Activated B cell treated with CpG ODN at 0.5 μM for 24 hours (primary cell): ENCODE measurements at regions of chr20 and their contacts with region 1.

Region 1: DNA sequence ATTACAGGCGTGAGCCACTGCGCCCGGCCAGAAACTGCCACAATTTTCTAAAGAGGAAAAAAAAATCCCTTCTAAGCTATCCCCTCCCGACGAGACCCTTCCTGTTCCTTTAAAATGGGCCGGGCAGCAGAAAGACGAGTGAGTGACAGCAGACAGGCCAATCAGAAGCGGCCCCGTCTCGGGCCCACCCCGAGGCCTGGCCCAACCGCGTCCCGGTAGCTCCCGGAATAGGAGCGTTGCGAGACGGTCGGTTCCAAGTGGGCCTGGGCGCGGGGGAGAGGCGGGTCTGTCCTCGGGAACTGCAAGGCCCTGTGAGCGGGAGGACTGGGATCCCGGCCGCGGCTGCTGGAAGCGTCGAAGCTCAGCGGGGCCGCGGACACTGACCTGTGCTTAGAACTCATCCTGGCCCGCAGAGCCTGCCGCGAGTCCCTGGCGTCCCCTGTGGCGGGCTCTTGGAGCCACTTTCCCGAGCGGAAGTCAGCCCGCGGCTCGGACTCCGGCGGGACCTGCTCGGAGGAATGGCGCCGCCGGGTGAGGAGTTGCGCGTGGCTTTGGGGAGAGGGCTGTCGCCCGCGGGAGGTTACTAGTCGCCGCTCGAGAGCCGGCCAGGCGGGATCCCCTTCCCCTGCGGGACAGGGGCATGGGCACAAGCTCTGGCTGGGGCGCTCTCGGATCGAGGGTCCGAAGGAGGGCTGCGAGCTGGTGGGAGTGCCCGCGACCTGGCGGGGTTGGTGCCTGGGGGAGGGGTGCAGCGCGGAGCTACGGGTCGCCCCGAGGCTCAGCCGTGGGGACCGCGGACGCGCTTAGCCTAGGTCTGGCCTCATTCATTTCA is at the starts of genes MROH8 and RPN2:
- DNase-seq: peak; percentile 88
- ATAC-seq: peak; percentile 91
- H3K4me3 Mint-ChIP-seq: peak within 1 kb of the TSS; percentile 98
- H3K27ac Mint-ChIP-seq: peak within 1 kb of the TSS; percentile 99
- H3K4me1 Mint-ChIP-seq: peaks cover 45% of the 10 kb centered on the region
- H3K27me3 Mint-ChIP-seq: no peaks in the 10 kb centered on the region
- CTCF ChIP-seq: no peak
- total RNA-seq, gene MROH8: 3.2 and 5.9 TPM in 2 replicates
- total RNA-seq, gene RPN2: 106 and 109 TPM in 2 replicates

Region 2: GRCh38 chr20:35771689-35772562 is 1407.1 kb before region 1 on chr20 and contains the start of gene PHF20:
- CTCF ChIA-PET with region 1: no interaction called
- POLR2A ChIA-PET with region 1: no interaction called
- intact Hi-C with region 1: loop called (anchors 2 kb)
- DNase-seq: peak; percentile 98
- ATAC-seq: peak; percentile 85
- H3K4me3 Mint-ChIP-seq: peak within 1 kb of the TSS; percentile 86
- H3K27ac Mint-ChIP-seq: peak within 1 kb of the TSS; percentile 95
- H3K4me1 Mint-ChIP-seq: peaks cover 79% of the 10 kb centered on the region
- H3K27me3 Mint-ChIP-seq: no peaks in the 10 kb centered on the region
- CTCF ChIP-seq: no peak
- total RNA-seq, gene PHF20: 72.3 and 86.0 TPM in 2 replicates

Region 3: GRCh38 chr20:36917943-36918342 is 261.1 kb before region 1 on chr20:
- CTCF ChIA-PET with region 1: no interaction called
- POLR2A ChIA-PET with region 1: no interaction called
- intact Hi-C with region 1: no loop called
- DNase-seq: no peak
- ATAC-seq: no peak
- H3K4me3 Mint-ChIP-seq: no peak overlapping the region
- H3K27ac Mint-ChIP-seq: no peak overlapping the region
- H3K4me1 Mint-ChIP-seq: no peaks in the 10 kb centered on the region
- H3K27me3 Mint-ChIP-seq: no peaks in the 10 kb centered on the region
- CTCF ChIP-seq: no peak

Region 4: DNA sequence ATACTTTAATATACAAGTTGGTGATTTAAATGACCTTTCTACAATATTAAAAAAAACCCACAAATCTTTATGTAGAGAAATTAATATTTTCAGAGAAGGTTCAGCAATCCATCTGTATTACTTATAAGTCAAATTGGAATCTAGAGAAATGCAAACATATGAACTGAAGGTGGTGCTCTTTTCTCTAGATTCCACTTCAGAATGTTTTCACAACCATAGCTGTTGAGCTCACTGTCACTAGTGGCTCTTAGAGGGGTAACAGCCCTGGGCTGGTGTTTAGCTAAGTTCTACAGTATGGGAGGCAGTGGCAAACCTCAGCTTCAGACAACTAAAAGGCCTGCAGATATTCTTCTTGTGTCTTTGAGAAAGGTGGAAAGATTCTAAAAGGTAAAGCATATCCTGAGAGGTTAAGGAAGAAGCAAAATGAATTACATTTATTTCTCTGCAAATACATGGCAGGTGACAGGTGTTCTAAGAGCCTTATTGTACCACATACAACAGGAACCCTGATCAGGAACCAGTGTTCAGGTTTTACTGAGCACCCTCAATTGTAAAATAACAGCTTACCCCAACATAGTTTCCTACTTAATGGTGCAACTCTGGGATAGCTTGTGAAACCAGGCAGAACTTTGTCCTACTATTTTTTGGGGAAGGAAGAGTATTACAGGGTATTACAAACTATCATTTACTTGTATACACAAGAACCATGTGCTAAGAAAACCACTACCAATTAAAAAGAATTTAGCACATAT is 171.0 kb before region 1 on chr20:
- CTCF ChIA-PET with region 1: interaction called, 4 read pairs
- POLR2A ChIA-PET with region 1: interaction called, 19 read pairs
- intact Hi-C with region 1: loop called (anchors 1 kb)
- DNase-seq: no peak
- ATAC-seq: peak; percentile 26
- H3K4me3 Mint-ChIP-seq: peak overlapping the region; percentile 17
- H3K27ac Mint-ChIP-seq: peak overlapping the region; percentile 69
- H3K4me1 Mint-ChIP-seq: peaks cover 45% of the 10 kb centered on the region
- H3K27me3 Mint-ChIP-seq: no peaks in the 10 kb centered on the region
- CTCF ChIP-seq: no peak

Region 5: GRCh38 chr20:37095599-37096414 is 83.2 kb before region 1 on chr20 and contains the start of gene RBL1:
- CTCF ChIA-PET with region 1: no interaction called
- POLR2A ChIA-PET with region 1: interaction called, 22 read pairs
- intact Hi-C with region 1: loop called (anchors 1 kb)
- DNase-seq: peak; percentile 85
- ATAC-seq: peak; percentile 87
- H3K4me3 Mint-ChIP-seq: peak within 1 kb of the TSS; percentile 99
- H3K27ac Mint-ChIP-seq: peak within 1 kb of the TSS; percentile 100
- H3K4me1 Mint-ChIP-seq: peaks cover 33% of the 10 kb centered on the region
- H3K27me3 Mint-ChIP-seq: no peaks in the 10 kb centered on the region
- CTCF ChIP-seq: no peak
- total RNA-seq, gene RBL1: 18.6 and 20.4 TPM in 2 replicates

Region 6: GRCh38 chr20:37270576-37271420 is 91.7 kb after region 1 on chr20:
- CTCF ChIA-PET with region 1: no interaction called
- POLR2A ChIA-PET with region 1: interaction called, 11 read pairs
- intact Hi-C with region 1: no loop called
- DNase-seq: peak; percentile 20
- ATAC-seq: peak; percentile 74
- H3K4me3 Mint-ChIP-seq: peak overlapping the region; percentile 11
- H3K27ac Mint-ChIP-seq: peak overlapping the region; percentile 72
- H3K4me1 Mint-ChIP-seq: peaks cover 52% of the 10 kb centered on the region
- H3K27me3 Mint-ChIP-seq: no peaks in the 10 kb centered on the region
- CTCF ChIP-seq: no peak

Region 7: GRCh38 chr20:37294262-37294981 is 115.4 kb after region 1 on chr20:
- CTCF ChIA-PET with region 1: no interaction called
- POLR2A ChIA-PET with region 1: interaction called, 10 read pairs
- intact Hi-C with region 1: loop called (anchors 1 kb)
- DNase-seq: no peak
- ATAC-seq: no peak
- H3K4me3 Mint-ChIP-seq: no peak overlapping the region
- H3K27ac Mint-ChIP-seq: peak overlapping the region; percentile 15
- H3K4me1 Mint-ChIP-seq: peaks cover 62% of the 10 kb centered on the region
- H3K27me3 Mint-ChIP-seq: no peaks in the 10 kb centered on the region
- CTCF ChIP-seq: no peak

Region 8: GRCh38 chr20:38033310-38034107 is 854.5 kb after region 1 on chr20 and contains the starts of genes RPRD1B and TTI1:
- CTCF ChIA-PET with region 1: no interaction called
- POLR2A ChIA-PET with region 1: interaction called, 18 read pairs
- intact Hi-C with region 1: loop called (anchors 1 kb)
- DNase-seq: peak; percentile 89
- ATAC-seq: peak; percentile 87
- H3K4me3 Mint-ChIP-seq: peak within 1 kb of the TSS; percentile 92
- H3K27ac Mint-ChIP-seq: peak within 1 kb of the TSS; percentile 96
- H3K4me1 Mint-ChIP-seq: peaks cover 67% of the 10 kb centered on the region
- H3K27me3 Mint-ChIP-seq: no peaks in the 10 kb centered on the region
- CTCF ChIP-seq: no peak
- total RNA-seq, gene RPRD1B: 38.4 and 40.8 TPM in 2 replicates
- total RNA-seq, gene TTI1: 27.1 and 30.1 TPM in 2 replicates